ENCODE measurements at regions of chr2 and their contacts with region 1.

Region 1: GRCh38 chr2:231463698-231464575 is at the start of gene NCL:
- DNase-seq: peak; percentile 90
- H3K4me3 Mint-ChIP-seq: peak within 1 kb of the TSS; percentile 96
- H3K27ac Mint-ChIP-seq: peak within 1 kb of the TSS; percentile 93
- H3K4me1 Mint-ChIP-seq: peaks cover 41% of the 10 kb centered on the region
- H3K27me3 Mint-ChIP-seq: no peaks in the 10 kb centered on the region
- total RNA-seq, gene NCL: 902 to 918 TPM

Region 2: DNA sequence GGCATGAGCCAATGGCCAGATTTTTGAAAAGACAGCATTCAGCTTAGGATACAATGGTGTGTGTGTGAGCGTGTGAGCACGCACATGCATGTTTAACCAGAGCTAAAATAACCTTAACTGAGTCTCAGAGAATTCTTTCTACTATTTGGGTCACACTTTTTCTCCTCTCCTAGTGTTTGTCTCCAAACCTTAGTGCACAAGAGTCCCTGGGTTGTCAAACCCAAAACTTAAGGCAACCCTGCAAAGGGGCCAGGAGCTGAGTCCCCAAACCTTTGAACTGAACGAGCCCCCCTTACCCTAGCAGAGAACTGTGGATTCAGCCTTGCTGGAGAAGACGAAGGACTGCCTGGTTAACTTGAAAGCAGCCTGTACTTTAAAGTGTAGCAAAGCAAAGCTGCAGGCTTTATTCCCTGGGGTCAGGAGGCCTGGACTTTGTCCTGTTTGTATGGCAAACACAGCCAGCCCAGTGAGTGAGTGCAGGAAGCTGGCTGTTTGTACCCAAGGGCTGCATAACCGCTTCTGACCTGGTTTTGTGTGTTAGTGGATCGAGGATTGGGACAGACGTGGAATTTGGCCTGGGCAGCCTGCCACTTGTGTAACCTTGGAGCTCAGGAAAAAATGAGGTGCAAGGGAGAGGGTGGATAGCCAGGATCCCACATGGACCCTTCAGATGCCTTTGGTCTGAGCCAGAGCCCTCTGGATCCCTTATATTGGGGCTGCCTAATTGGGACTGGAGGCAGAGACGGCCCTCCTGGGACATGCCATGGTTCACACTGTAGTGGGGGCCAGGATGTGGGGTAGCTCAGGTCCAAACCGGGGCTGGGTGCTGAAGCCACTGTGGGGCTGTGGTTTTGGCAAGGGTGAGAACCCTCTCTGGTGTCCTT is 413.7 kb before region 1 on chr2:
- CTCF ChIA-PET with region 1: no interaction called
- POLR2A ChIA-PET with region 1: no interaction called
- intact Hi-C with region 1: no loop called
- DNase-seq: no peak
- H3K4me3 Mint-ChIP-seq: no peak overlapping the region
- H3K27ac Mint-ChIP-seq: no peak overlapping the region
- H3K4me1 Mint-ChIP-seq: peaks cover 21% of the 10 kb centered on the region
- H3K27me3 Mint-ChIP-seq: peaks cover 3% of the 10 kb centered on the region

Region 3: DNA sequence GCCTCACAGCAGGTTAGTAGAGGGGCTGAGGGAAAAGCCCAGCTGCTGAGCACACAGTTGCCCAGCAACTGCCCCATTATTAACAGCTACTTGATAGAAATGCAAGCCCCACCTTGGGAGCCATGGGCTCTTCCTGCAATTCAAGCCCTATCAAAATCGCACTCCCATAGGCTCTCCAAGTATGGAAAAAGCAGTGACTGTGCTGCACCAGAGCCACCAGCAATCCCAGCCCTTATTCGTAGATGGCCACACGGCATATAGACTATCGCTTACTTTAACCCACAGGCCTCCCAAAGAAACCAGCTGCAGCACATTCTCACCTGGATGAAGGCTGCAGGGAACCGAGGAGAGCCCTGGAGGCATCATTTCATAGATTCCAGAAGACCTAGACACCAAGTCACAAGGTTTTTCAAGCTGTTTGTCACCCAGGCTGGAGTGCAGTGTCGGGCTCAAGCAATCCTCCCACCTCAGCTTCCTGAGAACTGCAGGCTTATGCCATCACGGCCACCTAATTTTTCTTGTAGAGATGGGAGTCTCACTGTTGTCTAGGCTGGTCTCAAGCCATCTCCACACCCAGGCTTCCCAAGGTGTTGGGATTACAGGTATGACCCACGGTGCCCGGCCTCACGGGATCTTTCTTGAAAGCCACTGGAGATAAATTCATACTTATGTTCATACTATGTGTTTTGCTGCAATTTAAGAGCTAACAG is 11.0 kb before region 1 on chr2:
- CTCF ChIA-PET with region 1: interaction called, 10 read pairs
- POLR2A ChIA-PET with region 1: interaction called, 88 read pairs
- intact Hi-C with region 1: no loop called
- DNase-seq: no peak
- H3K4me3 Mint-ChIP-seq: no peak overlapping the region
- H3K27ac Mint-ChIP-seq: peak overlapping the region; percentile 14
- H3K4me1 Mint-ChIP-seq: peaks cover 16% of the 10 kb centered on the region
- H3K27me3 Mint-ChIP-seq: no peaks in the 10 kb centered on the region

Region 4: DNA sequence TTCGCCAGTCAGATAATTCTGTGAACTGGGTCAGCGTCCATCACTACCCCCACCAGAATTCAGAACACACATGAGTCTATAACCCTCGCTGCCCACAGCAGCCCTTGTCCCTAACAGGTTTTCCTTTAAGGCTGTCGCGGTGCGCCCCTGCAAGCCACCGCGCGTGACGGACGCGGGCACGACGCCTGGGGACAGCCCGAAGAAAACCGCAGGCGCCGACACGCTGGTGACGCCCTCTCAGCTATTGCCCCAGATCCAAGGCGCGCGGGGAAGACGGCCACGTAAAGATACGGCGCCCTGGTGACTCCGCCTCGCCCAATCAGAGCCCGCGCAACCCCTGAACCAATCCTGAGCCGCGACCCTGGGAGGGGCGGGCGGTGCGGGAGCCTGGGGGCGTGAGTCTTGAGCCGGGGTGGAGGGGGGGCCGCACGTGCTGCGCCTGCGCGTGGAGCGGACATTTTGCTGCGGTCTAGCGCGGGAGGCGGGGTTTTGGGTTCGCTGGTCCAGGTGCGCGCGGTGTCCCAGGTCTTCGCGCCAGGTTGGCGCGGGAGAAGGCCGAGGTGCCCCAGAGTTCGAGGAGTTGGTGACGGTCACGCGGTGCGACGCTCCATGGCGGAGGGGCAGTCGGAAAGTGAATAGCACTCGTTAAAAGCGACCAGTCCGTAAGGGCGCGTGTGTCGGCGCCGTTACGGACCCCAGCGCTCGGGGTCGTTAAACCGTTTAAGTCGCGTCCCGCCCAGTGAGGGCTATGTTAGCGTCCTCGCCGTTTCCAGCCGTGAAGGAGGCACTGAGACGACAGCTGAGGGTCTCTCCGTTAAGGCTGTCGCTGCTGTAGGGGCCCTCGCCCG is 50.4 kb after region 1 on chr2:
- CTCF ChIA-PET with region 1: interaction called, 7 read pairs
- POLR2A ChIA-PET with region 1: interaction called, 12 read pairs
- intact Hi-C with region 1: loop called (anchors 1 kb)
- DNase-seq: peak; percentile 99
- H3K4me3 Mint-ChIP-seq: peak overlapping the region; percentile 93
- H3K27ac Mint-ChIP-seq: peak overlapping the region; percentile 91
- H3K4me1 Mint-ChIP-seq: peaks cover 14% of the 10 kb centered on the region
- H3K27me3 Mint-ChIP-seq: no peaks in the 10 kb centered on the region

Region 5: GRCh38 chr2:231524477-231525247 is 60.7 kb after region 1 on chr2:
- CTCF ChIA-PET with region 1: no interaction called
- POLR2A ChIA-PET with region 1: no interaction called
- intact Hi-C with region 1: no loop called
- DNase-seq: no peak
- H3K4me3 Mint-ChIP-seq: no peak overlapping the region
- H3K27ac Mint-ChIP-seq: no peak overlapping the region
- H3K4me1 Mint-ChIP-seq: peaks cover 26% of the 10 kb centered on the region
- H3K27me3 Mint-ChIP-seq: peaks cover 7% of the 10 kb centered on the region

Region 6: DNA sequence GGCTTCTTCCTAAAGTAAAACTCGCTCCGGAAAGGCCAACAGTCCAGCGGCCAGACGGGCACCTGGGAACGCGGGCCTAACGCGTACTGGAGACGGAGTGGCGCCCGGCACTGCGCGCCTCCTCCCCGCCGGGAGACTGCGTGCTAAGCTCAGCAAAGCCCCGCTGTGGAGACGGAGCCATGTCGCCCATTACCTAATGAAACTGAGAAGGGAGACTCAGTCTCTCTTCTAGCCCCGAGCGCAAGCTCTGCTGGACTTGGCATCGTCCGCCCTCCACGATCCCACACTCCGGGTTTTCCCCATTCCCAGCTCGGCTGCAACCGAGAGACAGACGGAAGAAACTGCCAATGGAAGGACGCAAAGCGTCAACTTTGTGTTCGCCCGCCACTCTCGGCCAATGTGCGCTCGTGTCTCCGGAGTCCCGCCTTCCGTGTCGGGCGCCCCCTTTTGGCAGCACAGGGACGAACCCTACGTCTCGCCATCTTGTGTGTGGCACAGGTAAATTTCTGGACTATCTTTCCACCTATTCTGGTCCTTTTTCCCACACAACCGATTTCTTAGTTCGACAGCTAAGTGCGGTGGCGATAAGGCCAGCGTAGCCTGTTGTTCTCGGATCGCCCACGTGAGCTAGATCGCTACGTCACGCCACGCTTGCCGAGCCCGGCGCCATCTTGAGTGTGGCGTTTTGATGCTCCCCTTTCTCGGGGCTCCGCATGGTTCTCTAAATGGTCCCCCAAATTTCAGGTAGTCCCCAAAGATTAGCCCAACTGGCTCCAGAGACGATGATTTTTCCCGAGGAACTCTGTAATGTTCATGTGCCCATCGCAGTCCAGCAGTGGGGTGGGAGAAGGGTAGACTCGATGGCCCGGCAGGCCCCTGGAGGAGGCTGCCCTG is 243.0 kb after region 1 on chr2:
- CTCF ChIA-PET with region 1: no interaction called
- POLR2A ChIA-PET with region 1: interaction called, 17 read pairs
- intact Hi-C with region 1: loop called (anchors 1 kb)
- DNase-seq: peak; percentile 98
- H3K4me3 Mint-ChIP-seq: peak overlapping the region; percentile 93
- H3K27ac Mint-ChIP-seq: peak overlapping the region; percentile 100
- H3K4me1 Mint-ChIP-seq: peaks cover 18% of the 10 kb centered on the region
- H3K27me3 Mint-ChIP-seq: peaks cover 3% of the 10 kb centered on the region

Measured in activated CD4-positive, alpha-beta memory T cell treated with anti-CD3 and anti-CD28 coated beads for 36 hours (primary cell).